ENCODE measurements at regions of chr17 and their contacts with region 1.

Region 1: DNA sequence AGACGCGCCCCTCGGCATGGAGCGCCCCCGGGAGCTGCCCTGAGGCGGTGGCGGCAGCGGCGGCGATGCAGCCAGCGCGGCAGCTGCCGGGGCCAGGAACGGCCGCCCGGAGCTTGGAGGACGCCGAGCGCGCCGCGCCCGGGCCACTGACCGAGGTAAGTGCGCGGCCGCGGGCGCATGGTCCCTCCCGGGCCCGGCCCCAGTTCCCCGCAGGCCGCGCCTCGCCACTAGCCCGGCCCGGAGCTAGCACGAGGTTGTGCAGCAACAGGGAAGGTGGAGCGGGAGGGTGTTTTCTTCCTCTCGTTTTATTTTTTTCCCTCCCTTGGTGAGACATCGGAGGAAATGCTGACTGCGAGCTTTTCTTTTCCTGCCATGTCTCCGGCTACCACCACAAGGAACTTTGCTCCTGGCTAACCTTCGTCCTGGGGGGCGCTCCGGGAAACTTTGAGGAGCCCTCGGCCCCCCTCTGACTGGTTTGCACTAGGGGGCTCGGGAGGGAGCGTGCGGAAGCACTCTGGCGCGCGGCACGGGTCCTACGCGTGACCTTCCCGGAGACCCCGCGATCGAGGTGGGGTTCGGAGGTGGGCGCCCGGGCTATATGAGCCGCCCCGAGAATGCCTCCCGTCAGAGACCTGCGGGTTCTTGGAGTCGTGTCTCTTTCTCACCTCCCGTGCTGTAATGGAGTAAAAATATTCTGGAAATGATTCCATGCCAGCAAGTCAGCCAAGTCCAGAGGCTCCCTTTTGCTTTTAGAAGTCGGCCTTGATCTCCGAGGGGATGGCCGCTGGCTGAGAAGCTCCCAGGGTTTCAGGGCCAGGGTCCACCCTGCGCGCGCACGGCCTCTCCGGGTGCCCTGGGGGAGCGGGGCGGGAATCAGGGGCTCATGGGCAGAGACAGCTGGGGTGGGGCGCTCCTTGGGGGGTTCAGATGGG is 868 bp downstream of the KCNJ12 start:
- DNase-seq: peak in 1 of 2 experiments; percentile 73
- H3K4me3 ChIP-seq: peak overlapping the region; percentile 38 to 75 (median 46)
- H3K27ac ChIP-seq: no peak overlapping the region
- H3K4me1 ChIP-seq: peaks cover 0 to 20% (median 10%) of the 10 kb centered on the region in 4 experiments; a peak in 5 of 7 replicates
- H3K27me3 ChIP-seq: peaks cover 14 to 49% (median 41%) of the 10 kb centered on the region in 4 experiments
- CTCF ChIP-seq: no peak
- EP300 ChIP-seq: no peak
- POLR2A ChIP-seq: no peak
- RAD21 ChIP-seq: no peak

Region 2: DNA sequence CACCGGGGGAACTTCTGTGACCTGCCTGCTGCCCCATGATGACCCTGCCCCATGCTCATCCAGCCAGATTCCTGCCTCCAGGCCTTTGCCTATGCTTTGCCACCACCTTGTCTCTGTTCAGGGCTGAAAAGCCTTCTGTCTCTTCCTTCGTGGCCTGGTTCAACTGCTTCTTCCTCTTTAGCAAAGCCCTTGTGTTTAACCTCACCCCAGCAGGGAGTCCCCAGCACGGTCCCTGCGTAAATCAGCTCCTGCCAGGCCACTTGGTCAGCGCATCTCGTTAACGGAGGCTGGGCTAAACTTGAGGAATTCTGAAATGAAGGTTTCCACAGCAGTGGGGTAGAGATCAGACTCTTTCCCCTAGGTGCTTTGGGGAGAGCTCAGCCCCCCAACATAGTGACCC is 17.0 kb before region 1 on chr17:
- CTCF ChIA-PET with region 1: interaction called, 10 read pairs
- POLR2A ChIA-PET with region 1: interaction called, 5 read pairs
- DNase-seq: no peak
- H3K4me3 ChIP-seq: no peak overlapping the region
- H3K27ac ChIP-seq: no peak overlapping the region
- H3K4me1 ChIP-seq: peaks cover 0 to 19% (median 6%) of the 10 kb centered on the region in 4 experiments; a peak in 6 of 7 replicates
- H3K27me3 ChIP-seq: no peaks in the 10 kb centered on the region; a peak in 3 of 7 replicates
- CTCF ChIP-seq: no peak
- EP300 ChIP-seq: no peak
- POLR2A ChIP-seq: no peak
- RAD21 ChIP-seq: no peak

Region 3: GRCh38 chr17:21457051-21458026 is 80.3 kb after region 1 on chr17:
- CTCF ChIA-PET with region 1: interaction called, 10 read pairs
- POLR2A ChIA-PET with region 1: no interaction called
- DNase-seq: peak; percentile 58 to 99
- H3K4me3 ChIP-seq: peak overlapping the region in 3 of 4 experiments; percentile 12 to 43 (median 19); a peak in 5 of 8 replicates
- H3K27ac ChIP-seq: no peak overlapping the region
- H3K4me1 ChIP-seq: peaks cover 4 to 11% (median 7%) of the 10 kb centered on the region in 4 experiments
- H3K27me3 ChIP-seq: peaks cover 0 to 16% (median 11%) of the 10 kb centered on the region in 4 experiments; a peak in 6 of 7 replicates
- CTCF ChIP-seq: peak; percentile 70 to 87 (median 83)
- EP300 ChIP-seq: no peak
- POLR2A ChIP-seq: no peak
- RAD21 ChIP-seq: peak; percentile 60 to 76